CD8-positive, alpha-beta T cell (primary cell): ENCODE measurements at regions of chr6 and their contacts with region 1.

Region 1: DNA sequence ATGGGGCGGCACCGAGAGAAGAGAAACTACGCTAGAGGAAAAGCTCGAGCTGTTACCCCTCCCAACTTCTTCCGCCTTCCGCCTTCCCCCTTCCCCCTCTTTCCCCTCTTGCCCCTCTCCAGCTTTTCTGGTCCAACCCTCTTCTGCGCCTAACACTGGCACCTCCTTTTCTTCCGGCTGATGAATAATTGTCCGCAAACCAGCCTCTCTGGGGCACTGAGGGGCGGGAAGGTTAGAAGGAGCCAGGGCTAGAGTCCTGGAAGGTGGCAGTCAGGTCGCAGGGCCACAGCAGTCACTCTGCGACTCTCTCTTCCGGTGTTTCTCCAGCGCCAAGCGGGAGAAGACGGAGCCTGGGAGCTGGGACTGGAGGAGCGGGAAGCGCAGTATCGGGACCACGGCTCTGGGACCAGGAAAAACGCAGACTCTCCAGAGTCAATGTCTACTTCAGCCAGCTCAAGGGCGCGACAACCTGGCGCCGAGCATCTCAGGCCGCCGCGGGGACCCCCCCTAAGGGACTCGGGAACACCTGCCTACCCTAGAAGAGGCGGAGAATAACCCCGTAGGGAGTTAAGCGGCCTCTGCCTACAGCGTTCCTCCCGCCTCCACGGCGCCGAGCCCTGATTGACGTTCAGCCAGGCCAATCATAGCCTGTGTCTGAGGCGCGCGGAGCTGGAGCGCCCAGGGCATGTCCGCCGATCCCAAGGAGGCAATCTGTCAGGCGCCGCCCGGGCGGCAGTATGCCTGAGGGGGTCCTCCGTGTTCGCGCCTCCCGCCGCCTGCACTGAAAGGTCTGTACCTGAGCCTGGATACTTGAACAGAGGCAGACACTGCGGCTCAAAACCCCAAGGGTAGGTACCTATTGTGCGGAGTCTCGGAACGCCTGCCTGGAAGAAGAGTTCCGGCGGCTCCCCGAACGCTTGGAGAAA is 40.4 kb downstream of the PSMB9 start:
- DNase-seq: peak; percentile 88 to 98 (median 95)
- ATAC-seq: peak; percentile 96
- H3K4me3 ChIP-seq: peak overlapping the region; percentile 89 to 92
- H3K4me3 Mint-ChIP-seq: peak overlapping the region; percentile 99
- H3K27ac ChIP-seq: peak overlapping the region; percentile 62 to 89
- H3K27ac Mint-ChIP-seq: peak overlapping the region; percentile 97
- H3K4me1 ChIP-seq: peaks cover 20% of the 10 kb centered on the region
- H3K4me1 Mint-ChIP-seq: peaks cover 46% of the 10 kb centered on the region
- H3K27me3 ChIP-seq: no peaks in the 10 kb centered on the region
- H3K27me3 Mint-ChIP-seq: no peaks in the 10 kb centered on the region
- CTCF ChIP-seq: no peak

Region 2: DNA sequence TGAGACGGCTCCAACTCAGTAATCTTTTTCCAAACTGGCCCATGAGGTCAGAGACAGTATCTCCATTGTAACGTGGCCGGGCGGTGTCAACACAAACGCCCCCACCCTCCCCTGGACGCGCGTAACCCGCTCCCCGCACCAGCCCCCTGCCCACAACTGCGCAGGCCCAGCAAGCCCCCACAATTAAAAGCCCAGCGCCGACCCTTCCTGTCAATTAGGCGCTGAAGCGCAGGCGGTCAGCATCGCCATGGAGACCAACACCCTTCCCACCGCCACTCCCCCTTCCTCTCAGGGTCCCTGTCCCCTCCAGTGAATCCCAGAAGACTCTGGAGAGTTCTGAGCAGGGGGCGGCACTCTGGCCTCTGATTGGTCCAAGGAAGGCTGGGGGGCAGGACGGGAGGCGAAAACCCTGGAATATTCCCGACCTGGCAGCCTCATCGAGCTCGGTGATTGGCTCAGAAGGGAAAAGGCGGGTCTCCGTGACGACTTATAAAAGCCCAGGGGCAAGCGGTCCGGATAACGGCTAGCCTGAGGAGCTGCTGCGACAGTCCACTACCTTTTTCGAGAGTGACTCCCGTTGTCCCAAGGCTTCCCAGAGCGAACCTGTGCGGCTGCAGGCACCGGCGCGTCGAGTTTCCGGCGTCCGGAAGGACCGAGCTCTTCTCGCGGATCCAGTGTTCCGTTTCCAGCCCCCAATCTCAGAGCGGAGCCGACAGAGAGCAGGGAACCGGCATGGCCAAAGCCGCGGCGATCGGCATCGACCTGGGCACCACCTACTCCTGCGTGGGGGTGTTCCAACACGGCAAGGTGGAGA is 1079.1 kb before region 1 on chr6 and contains the starts of genes HSPA1A and HSPA1L:
- CTCF ChIA-PET with region 1: no interaction called
- POLR2A ChIA-PET with region 1: no interaction called
- intact Hi-C with region 1: no loop called
- DNase-seq: peak in 7 of 9 experiments; percentile 41 to 75 (median 63)
- ATAC-seq: peak; percentile 13
- H3K4me3 ChIP-seq: peak within 1 kb of the TSS; percentile 74 to 96
- H3K4me3 Mint-ChIP-seq: peak within 1 kb of the TSS; percentile 93
- H3K27ac ChIP-seq: peak within 1 kb of the TSS; percentile 58 to 82
- H3K27ac Mint-ChIP-seq: peak within 1 kb of the TSS; percentile 83
- H3K4me1 ChIP-seq: peaks cover 16% of the 10 kb centered on the region
- H3K4me1 Mint-ChIP-seq: peaks cover 36% of the 10 kb centered on the region
- H3K27me3 ChIP-seq: no peaks in the 10 kb centered on the region
- H3K27me3 Mint-ChIP-seq: no peaks in the 10 kb centered on the region
- CTCF ChIP-seq: no peak
- total RNA-seq, gene HSPA1A: 2.1 to 2.2 TPM
- total RNA-seq, gene HSPA1L: 1.2 TPM

Region 3: GRCh38 chr6:32940656-32941213 is 46.4 kb after region 1 on chr6 and contains the start of gene HLA-DMB:
- CTCF ChIA-PET with region 1: interaction called, 24 read pairs
- POLR2A ChIA-PET with region 1: interaction called, 4 read pairs
- intact Hi-C with region 1: loop called (anchors 1 to 2 kb)
- DNase-seq: peak in 7 of 9 experiments; percentile 18 to 91 (median 51)
- ATAC-seq: peak; percentile 78
- H3K4me3 ChIP-seq: peak within 1 kb of the TSS; percentile 64 to 79
- H3K4me3 Mint-ChIP-seq: peak within 1 kb of the TSS; percentile 94
- H3K27ac ChIP-seq: peak within 1 kb of the TSS; percentile 72 to 91
- H3K27ac Mint-ChIP-seq: peak within 1 kb of the TSS; percentile 97
- H3K4me1 ChIP-seq: peaks cover 61% of the 10 kb centered on the region
- H3K4me1 Mint-ChIP-seq: peaks cover 62% of the 10 kb centered on the region
- H3K27me3 ChIP-seq: no peaks in the 10 kb centered on the region
- H3K27me3 Mint-ChIP-seq: no peaks in the 10 kb centered on the region
- CTCF ChIP-seq: no peak
- total RNA-seq, gene HLA-DMB: 8.9 to 9.9 TPM

Region 4: GRCh38 chr6:33075568-33076405 is 181.4 kb after region 1 on chr6 and contains the start of gene HLA-DPB1:
- CTCF ChIA-PET with region 1: no interaction called
- POLR2A ChIA-PET with region 1: no interaction called
- intact Hi-C with region 1: loop called in 1 of 2 experiments (anchors 10 kb)
- DNase-seq: peak in 6 of 9 experiments; percentile 17 to 92 (median 45)
- ATAC-seq: peak; percentile 94
- H3K4me3 ChIP-seq: peak within 1 kb of the TSS; percentile 56 to 94
- H3K4me3 Mint-ChIP-seq: peak within 1 kb of the TSS; percentile 90
- H3K27ac ChIP-seq: peak within 1 kb of the TSS; percentile 66 to 91
- H3K27ac Mint-ChIP-seq: peak within 1 kb of the TSS; percentile 89
- H3K4me1 ChIP-seq: peaks cover 32% of the 10 kb centered on the region
- H3K4me1 Mint-ChIP-seq: peaks cover 73% of the 10 kb centered on the region
- H3K27me3 ChIP-seq: no peaks in the 10 kb centered on the region
- H3K27me3 Mint-ChIP-seq: no peaks in the 10 kb centered on the region
- CTCF ChIP-seq: no peak
- total RNA-seq, gene HLA-DPB1: 55.3 to 58.6 TPM